ENCODE measurements at regions of chr1 and their contacts with region 1.

Region 1: DNA sequence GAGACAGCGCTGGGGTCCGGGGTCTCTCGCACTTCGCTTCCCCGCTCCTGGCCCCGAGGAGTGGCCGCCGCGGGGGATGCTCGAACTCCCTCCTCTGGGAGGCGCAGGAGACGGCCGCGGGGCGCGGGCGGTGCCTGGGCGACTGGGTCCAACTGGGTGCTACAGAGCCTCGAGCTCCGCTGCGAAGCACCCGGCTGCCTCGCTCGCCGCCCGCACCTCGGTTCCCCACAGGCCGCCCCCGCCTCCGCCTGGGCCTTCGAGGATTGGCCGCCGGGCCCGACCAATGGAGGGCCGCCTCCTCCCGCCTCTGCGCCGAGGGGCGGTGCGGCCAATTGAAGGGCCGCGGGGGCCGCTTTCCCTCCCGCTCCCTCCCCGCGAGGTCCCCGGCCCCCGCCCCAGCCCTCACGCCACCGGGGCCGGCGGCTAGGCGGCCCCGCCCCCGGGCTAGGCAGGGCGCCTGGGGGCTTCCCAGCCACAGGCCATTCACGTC is at the start of gene CNN3:
- DNase-seq: peak; percentile 93
- H3K4me3 ChIP-seq: peak within 1 kb of the TSS; percentile 75 to 99 (median 90)
- H3K27ac ChIP-seq: peak within 1 kb of the TSS; percentile 100
- H3K4me1 ChIP-seq: peaks cover 49% of the 10 kb centered on the region
- H3K27me3 ChIP-seq: no peaks in the 10 kb centered on the region
- CTCF ChIP-seq: no peak
- POLR2A ChIP-seq: peak; percentile 93
- total RNA-seq, gene CNN3: 317 and 392 TPM in 2 replicates

Region 2: DNA sequence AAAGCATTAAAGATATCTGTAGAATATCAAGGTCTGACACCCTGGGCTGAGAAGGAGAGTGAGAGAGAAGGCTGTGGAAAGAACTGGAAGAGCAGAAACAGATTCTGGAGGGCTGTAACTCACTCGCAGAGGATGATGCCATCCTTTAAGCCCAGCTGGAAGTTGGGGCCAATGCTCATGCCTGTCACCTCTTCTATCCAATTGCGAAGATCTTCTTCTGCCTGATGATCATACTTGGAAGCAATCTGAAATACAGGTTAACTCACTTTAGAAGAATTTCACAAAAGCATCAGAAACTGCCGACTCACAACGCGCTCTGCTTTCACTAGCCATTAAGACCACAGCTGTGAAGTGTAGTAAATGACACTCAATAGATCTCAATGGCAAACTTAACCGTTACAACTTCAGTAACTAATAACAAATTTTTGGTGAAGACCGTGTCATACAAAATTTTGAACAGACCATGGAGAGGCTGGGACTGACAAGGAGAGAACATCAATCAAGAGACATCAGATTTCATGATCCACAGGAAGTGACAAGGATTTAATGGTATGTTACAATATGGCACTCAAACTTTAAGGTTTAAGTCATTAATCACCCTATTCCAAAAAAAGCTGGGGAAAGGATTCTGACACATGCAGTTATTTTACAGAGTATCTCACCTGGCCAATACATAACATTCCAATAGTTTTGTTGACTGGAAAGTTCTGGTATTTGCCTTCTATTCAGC is 23.5 kb before region 1 on chr1:
- CTCF ChIA-PET with region 1: interaction called, 4 read pairs
- POLR2A ChIA-PET with region 1: no interaction called
- dilution Hi-C with region 1: no loop called
- intact Hi-C with region 1: loop called (anchors 2 kb)
- DNase-seq: no peak
- H3K4me3 ChIP-seq: no peak overlapping the region
- H3K27ac ChIP-seq: no peak overlapping the region
- H3K4me1 ChIP-seq: peaks cover 3% of the 10 kb centered on the region
- H3K27me3 ChIP-seq: no peaks in the 10 kb centered on the region
- CTCF ChIP-seq: no peak
- POLR2A ChIP-seq: no peak

Region 3: GRCh38 chr1:94955767-94956632 is 29.0 kb after region 1 on chr1:
- CTCF ChIA-PET with region 1: interaction called, 3 read pairs
- POLR2A ChIA-PET with region 1: no interaction called
- dilution Hi-C with region 1: no loop called
- intact Hi-C with region 1: loop called (anchors 1 kb)
- DNase-seq: peak; percentile 53
- H3K4me3 ChIP-seq: no peak overlapping the region
- H3K27ac ChIP-seq: no peak overlapping the region
- H3K4me1 ChIP-seq: peaks cover 23% of the 10 kb centered on the region
- H3K27me3 ChIP-seq: no peaks in the 10 kb centered on the region
- CTCF ChIP-seq: no peak
- POLR2A ChIP-seq: no peak

Region 4: DNA sequence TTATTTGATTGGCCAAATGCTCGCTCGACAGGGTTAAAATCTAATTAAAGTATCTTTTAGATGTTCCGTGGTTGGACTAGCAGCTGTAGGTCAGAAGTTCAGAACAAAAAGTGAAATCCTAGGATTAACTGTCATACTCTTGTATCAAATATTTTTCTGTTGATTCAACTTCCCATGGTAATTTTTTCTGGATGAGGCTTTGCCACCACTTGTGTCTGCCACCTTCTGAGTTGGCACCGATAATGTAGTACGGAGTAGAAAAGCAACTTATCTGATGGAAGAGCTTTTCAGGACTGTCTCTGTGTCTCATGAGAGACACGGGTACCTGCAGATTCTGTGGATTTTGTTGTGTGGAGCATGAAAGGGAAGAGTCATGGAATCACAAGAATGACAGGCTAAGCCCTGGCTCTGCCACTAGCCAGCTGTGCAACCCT is 44.5 kb after region 1 on chr1:
- CTCF ChIA-PET with region 1: no interaction called
- POLR2A ChIA-PET with region 1: no interaction called
- dilution Hi-C with region 1: no loop called
- intact Hi-C with region 1: loop called (anchors 1 kb)
- DNase-seq: peak; percentile 55
- H3K4me3 ChIP-seq: peak overlapping the region in 1 of 3 experiments; percentile 5
- H3K27ac ChIP-seq: peak overlapping the region; percentile 27
- H3K4me1 ChIP-seq: peaks cover 29% of the 10 kb centered on the region
- H3K27me3 ChIP-seq: no peaks in the 10 kb centered on the region
- CTCF ChIP-seq: no peak
- POLR2A ChIP-seq: no peak

Region 5: GRCh38 chr1:95023399-95024043 is 96.6 kb after region 1 on chr1:
- CTCF ChIA-PET with region 1: interaction called, 3 read pairs
- POLR2A ChIA-PET with region 1: interaction called, 3 read pairs
- dilution Hi-C with region 1: loop called (anchors 25 kb)
- intact Hi-C with region 1: loop called (anchors 1 kb)
- DNase-seq: peak; percentile 77
- H3K4me3 ChIP-seq: no peak overlapping the region
- H3K27ac ChIP-seq: no peak overlapping the region
- H3K4me1 ChIP-seq: peaks cover 39% of the 10 kb centered on the region
- H3K27me3 ChIP-seq: no peaks in the 10 kb centered on the region
- CTCF ChIP-seq: no peak
- POLR2A ChIP-seq: no peak